CD4-positive, alpha-beta T cell (primary cell): ENCODE measurements at regions of chr2 and their contacts with region 1.

Region 1: GRCh38 chr2:233854241-233854981 is at the start of gene HJURP:
- DNase-seq: peak; percentile 76 to 96 (median 82)
- ATAC-seq: peak; percentile 97
- H3K4me3 ChIP-seq: peak within 1 kb of the TSS; percentile 83
- H3K4me3 Mint-ChIP-seq: peak within 1 kb of the TSS; percentile 88
- H3K27ac ChIP-seq: no peak within 1 kb of the TSS
- H3K27ac Mint-ChIP-seq: peak within 1 kb of the TSS; percentile 21
- H3K4me1 ChIP-seq: peaks cover 21% of the 10 kb centered on the region
- H3K4me1 Mint-ChIP-seq: peaks cover 32% of the 10 kb centered on the region
- H3K27me3 ChIP-seq: peaks cover 4 to 9% of the 10 kb centered on the region in 2 experiments
- H3K27me3 Mint-ChIP-seq: peaks cover 16% of the 10 kb centered on the region
- CTCF ChIP-seq: no peak
- total RNA-seq, gene HJURP: 0.22 to 0.25 TPM

Region 2: DNA sequence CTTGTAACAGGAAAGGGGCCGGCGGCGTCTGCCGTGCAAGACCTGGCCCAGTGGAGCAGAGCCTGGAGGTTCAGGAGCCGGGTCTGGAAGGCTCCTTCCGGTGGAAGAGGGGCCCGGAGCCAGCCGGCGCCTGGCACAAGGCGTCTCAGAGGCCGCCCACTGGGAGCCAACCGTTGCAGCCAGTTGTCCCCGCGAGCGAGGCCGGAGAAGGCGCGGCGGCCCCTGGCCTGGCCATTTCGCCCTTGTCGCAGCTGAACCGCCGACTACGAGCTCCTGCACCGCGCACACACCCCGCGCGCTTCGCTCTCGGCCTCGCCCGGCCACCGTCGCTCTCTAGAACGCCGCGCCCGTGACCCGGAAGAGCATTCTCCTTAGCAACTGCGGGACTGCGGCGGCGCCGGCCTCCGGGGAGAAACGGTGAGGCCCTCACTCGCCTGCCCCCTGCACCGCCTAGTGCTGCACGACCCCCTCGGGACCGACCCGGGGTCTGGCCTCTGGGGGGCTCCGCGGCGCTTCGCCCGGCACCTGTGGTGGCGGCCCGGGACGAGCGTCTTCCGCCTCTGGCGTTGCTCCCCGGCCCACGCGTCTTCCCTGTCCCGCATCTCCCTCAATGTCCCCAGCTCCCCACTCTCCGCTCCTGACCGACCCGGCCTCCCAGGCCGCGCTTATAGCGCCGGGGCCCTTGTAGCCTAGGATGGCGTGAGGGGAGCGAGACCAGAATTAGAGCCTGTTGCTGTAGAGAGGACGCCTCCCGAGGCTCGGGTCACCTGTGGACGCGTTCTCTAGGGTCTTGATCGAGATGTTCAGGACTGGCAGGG is 1892.9 kb before region 1 on chr2 and contains the start of gene DIS3L2:
- CTCF ChIA-PET with region 1: no interaction called
- POLR2A ChIA-PET with region 1: no interaction called
- intact Hi-C with region 1: loop called in 1 of 2 experiments (anchors 5 kb)
- DNase-seq: peak; percentile 66 to 90 (median 74)
- ATAC-seq: peak; percentile 93
- H3K4me3 ChIP-seq: peak within 1 kb of the TSS; percentile 96
- H3K4me3 Mint-ChIP-seq: peak within 1 kb of the TSS; percentile 97
- H3K27ac ChIP-seq: peak within 1 kb of the TSS; percentile 45 to 69
- H3K27ac Mint-ChIP-seq: peak within 1 kb of the TSS; percentile 87
- H3K4me1 ChIP-seq: peaks cover 28% of the 10 kb centered on the region
- H3K4me1 Mint-ChIP-seq: peaks cover 47% of the 10 kb centered on the region
- H3K27me3 ChIP-seq: no peaks in the 10 kb centered on the region
- H3K27me3 Mint-ChIP-seq: no peaks in the 10 kb centered on the region
- CTCF ChIP-seq: no peak
- total RNA-seq, gene DIS3L2: 59.8 to 62.9 TPM

Region 3: DNA sequence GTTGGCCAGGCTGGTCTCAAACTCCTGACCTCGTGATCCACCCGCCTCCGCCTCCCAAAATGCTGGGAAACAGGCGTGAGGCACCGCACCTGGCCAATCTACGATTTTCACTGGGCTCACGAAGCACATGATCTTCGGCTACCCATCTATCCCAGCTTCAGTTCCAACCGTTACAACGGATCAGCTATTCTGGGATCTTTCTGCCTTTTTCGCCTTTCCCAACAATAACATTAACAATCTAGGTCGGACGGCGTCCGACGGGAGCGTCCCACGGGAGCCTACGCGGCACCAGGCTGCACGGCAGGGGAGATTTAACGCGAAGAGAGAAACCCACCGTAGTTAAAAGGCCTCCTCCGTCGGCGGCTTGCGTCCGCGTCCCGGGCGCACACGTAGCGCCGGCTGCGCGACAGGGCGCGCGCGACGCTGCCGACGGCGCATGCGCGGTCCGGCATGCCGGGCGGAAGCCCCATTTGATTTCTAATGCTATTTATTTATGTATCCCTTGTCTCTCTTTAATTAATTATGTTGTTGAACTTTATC is 13.7 kb after region 1 on chr2 and contains the start of gene MSL3B:
- CTCF ChIA-PET with region 1: interaction called, 6 read pairs
- POLR2A ChIA-PET with region 1: interaction called, 5 read pairs
- intact Hi-C with region 1: loop called in 1 of 2 experiments (anchors 2 kb)
- DNase-seq: peak; percentile 27 to 89 (median 55)
- ATAC-seq: peak; percentile 94
- H3K4me3 ChIP-seq: peak within 1 kb of the TSS; percentile 74
- H3K4me3 Mint-ChIP-seq: peak within 1 kb of the TSS; percentile 92
- H3K27ac ChIP-seq: peak within 1 kb of the TSS in 1 of 2 donors; percentile 17
- H3K27ac Mint-ChIP-seq: peak within 1 kb of the TSS; percentile 82
- H3K4me1 ChIP-seq: peaks cover 6% of the 10 kb centered on the region
- H3K4me1 Mint-ChIP-seq: peaks cover 13% of the 10 kb centered on the region
- H3K27me3 ChIP-seq: peaks cover 0 to 10% of the 10 kb centered on the region in 2 experiments
- H3K27me3 Mint-ChIP-seq: peaks cover 23% of the 10 kb centered on the region
- CTCF ChIP-seq: no peak

Region 4: GRCh38 chr2:234257856-234258561 is 403.6 kb after region 1 on chr2:
- CTCF ChIA-PET with region 1: no interaction called
- POLR2A ChIA-PET with region 1: no interaction called
- intact Hi-C with region 1: no loop called
- DNase-seq: peak in 6 of 14 experiments; percentile 15 to 52 (median 26)
- ATAC-seq: peak; percentile 44
- H3K4me3 ChIP-seq: no peak overlapping the region
- H3K4me3 Mint-ChIP-seq: no peak overlapping the region
- H3K27ac ChIP-seq: no peak overlapping the region
- H3K27ac Mint-ChIP-seq: no peak overlapping the region
- H3K4me1 ChIP-seq: peaks cover 8% of the 10 kb centered on the region
- H3K4me1 Mint-ChIP-seq: peaks cover 13% of the 10 kb centered on the region
- H3K27me3 ChIP-seq: no peaks in the 10 kb centered on the region
- H3K27me3 Mint-ChIP-seq: no peaks in the 10 kb centered on the region
- CTCF ChIP-seq: no peak